Activated CD4-positive, alpha-beta T cell treated with anti-CD3 and anti-CD28 coated beads for 36 hours (primary cell): ENCODE measurements at regions of chr3 and their contacts with region 1.

Region 1: DNA sequence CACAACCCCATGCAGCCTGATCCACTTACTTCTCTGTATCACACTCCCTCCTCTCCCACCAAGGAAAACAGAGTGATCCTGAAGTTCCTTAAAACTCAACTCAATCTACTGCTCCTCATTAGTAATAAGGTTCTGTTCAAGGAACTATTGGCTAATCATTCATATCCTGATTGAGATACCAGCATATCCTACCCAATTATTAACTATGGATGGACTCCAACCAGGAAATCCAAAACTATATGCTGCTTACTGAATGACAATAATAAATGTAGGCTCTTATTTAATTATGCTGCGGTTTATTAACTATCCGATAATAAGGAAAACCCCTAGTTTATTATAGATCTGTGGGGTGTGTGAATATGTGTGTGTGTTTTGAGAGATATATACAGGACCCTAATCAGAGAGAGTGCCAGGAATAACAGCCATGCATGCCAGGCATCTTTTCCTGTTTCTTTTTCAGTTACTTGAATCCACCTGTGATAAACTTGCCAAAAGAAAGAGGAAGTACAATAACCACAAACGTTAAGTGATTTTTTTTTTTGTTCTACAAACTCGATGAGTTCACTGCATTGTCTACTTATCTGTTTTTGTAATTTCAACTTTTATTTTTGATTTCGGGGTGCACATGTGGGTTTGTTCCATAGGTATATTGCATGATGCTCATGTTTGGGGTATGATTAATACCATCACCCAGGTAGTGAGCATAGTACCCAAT is 1031.7 kb upstream of the CFAP20DC start:
- DNase-seq: no peak
- ATAC-seq: no peak
- H3K4me3 Mint-ChIP-seq: peak overlapping the region; percentile 40
- H3K27ac Mint-ChIP-seq: peak overlapping the region; percentile 88
- H3K4me1 Mint-ChIP-seq: peaks cover 67% of the 10 kb centered on the region
- H3K27me3 Mint-ChIP-seq: no peaks in the 10 kb centered on the region

Region 2: DNA sequence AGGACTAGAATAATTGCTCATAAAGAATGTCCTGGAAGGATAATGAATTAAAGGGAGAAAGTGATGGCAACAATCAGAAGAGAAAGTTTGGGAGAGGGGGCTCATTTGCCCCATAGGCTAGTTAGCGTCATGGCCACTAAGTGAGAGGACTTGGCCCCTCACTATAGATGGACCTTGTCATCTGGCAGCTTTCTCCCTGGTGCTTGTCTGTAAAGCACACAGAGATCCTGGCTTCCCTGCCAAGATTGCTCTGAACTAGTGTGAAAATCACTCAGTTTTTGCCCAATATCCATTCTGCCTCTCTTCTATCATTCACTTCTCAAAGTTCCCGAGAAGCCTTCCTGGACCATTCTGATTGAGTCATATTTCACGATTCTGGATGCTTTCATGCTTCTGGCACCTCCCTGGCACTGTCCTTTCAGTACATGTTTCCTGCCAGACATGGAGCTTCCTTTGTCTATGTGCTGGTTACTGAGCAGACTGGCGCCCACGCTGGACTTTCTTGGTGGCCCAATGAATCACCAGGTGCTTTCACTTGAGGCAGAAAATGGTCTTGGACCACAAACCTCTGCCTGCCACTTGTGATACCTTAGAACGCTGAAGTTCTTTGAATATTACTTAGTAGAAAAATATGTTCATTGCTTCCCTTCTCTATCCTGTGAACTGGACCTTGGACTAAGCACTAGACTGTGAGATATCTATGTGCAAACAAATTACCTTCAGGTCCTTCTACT is 322.1 kb before region 1 on chr3:
- CTCF ChIA-PET with region 1: no interaction called
- POLR2A ChIA-PET with region 1: no interaction called
- intact Hi-C with region 1: loop called in 1 of 2 experiments (anchors 10 kb)
- DNase-seq: peak; percentile 81
- ATAC-seq: peak; percentile 78
- H3K4me3 Mint-ChIP-seq: no peak overlapping the region
- H3K27ac Mint-ChIP-seq: peak overlapping the region; percentile 10
- H3K4me1 Mint-ChIP-seq: peaks cover 74% of the 10 kb centered on the region
- H3K27me3 Mint-ChIP-seq: no peaks in the 10 kb centered on the region

Region 3: GRCh38 chr3:59866076-59866475 is 215.5 kb before region 1 on chr3:
- CTCF ChIA-PET with region 1: no interaction called
- POLR2A ChIA-PET with region 1: no interaction called
- intact Hi-C with region 1: loop called (anchors 1 to 10 kb)
- DNase-seq: no peak
- ATAC-seq: no peak
- H3K4me3 Mint-ChIP-seq: no peak overlapping the region
- H3K27ac Mint-ChIP-seq: no peak overlapping the region
- H3K4me1 Mint-ChIP-seq: peaks cover 42% of the 10 kb centered on the region
- H3K27me3 Mint-ChIP-seq: no peaks in the 10 kb centered on the region

Region 4: DNA sequence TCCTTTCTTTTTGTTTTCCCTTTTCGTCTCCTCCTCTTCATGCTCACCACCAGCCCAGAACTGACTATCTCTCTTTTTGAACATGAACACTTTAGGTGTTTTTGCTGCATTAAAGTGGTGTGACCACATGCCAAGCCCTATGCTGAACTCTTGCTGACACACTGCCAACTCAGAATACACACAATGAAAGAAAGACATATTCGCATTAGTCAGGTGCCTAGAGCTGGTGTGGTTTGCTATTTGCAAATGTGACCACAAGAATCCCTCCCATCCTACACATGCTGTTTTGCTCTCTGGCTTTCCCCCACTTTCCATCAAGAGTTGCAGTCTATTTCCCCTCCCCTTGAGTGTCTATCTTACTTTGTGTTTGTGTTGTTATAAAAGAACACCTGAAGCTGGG is 63.9 kb before region 1 on chr3:
- CTCF ChIA-PET with region 1: no interaction called
- POLR2A ChIA-PET with region 1: interaction called, 3 read pairs
- intact Hi-C with region 1: loop called (anchors 1 kb)
- DNase-seq: peak; percentile 77
- ATAC-seq: peak; percentile 88
- H3K4me3 Mint-ChIP-seq: peak overlapping the region; percentile 38
- H3K27ac Mint-ChIP-seq: peak overlapping the region; percentile 95
- H3K4me1 Mint-ChIP-seq: peaks cover 77% of the 10 kb centered on the region
- H3K27me3 Mint-ChIP-seq: no peaks in the 10 kb centered on the region

Region 5: DNA sequence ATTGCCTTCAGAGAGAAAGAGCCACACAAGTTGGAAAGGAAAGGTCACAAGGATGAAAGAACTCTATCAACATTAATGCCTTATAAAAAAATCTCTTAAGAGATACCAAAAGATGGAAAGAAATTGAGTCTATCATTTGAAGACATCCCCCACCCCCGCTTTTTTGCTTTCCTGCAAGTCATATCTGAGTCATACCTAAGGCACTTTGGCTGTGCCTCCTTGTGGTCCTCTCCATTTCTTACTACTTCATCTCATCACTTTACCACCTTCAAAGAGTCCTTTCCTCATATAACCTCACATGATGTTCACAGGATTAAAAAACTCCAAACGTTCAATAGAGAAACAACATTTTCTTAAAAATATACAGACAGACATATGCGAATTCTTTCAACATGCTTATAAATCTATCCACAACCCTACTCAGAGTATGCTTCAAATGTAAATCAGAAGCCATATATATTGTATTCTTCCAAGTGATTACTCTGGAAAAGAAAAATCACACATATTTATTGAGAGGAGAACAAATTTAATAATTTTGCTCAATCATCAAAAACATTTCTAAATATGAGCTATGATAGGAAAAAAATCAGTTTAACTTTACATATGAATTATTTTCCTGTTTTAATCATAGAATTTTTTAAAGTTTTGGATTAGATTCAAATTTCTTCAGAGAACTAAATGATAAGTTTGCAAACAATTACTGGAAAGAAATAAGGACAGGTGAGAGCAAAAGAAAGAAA is 27.8 kb before region 1 on chr3:
- CTCF ChIA-PET with region 1: interaction called, 7 read pairs
- POLR2A ChIA-PET with region 1: no interaction called
- intact Hi-C with region 1: loop called (anchors 1 kb)
- DNase-seq: peak; percentile 73
- ATAC-seq: peak; percentile 67
- H3K4me3 Mint-ChIP-seq: peak overlapping the region; percentile 45
- H3K27ac Mint-ChIP-seq: peak overlapping the region; percentile 86
- H3K4me1 Mint-ChIP-seq: peaks cover 82% of the 10 kb centered on the region
- H3K27me3 Mint-ChIP-seq: no peaks in the 10 kb centered on the region